ENCODE measurements at regions of chr4 and their contacts with region 1.

Region 1: DNA sequence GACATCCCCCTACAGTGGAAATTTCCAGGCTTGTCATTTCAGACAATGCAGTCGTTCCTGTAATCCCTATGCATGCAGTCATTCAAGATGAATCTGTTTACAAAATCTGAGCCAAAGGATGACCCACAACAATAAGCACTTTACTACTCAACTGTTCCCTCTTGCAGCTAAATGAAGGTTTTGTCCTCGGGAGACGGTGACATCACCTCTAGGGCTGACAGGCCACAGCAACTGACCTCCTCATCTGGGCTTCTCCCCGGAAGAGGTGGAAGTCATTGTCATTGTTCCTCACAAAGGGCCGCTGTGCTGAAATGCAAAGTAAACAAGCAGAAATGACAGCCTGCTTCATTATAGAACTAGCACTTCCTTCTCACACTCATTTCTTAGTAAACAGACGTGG is 29.2 kb downstream of the CLRN2 start:
- DNase-seq: no peak
- H3K4me3 ChIP-seq: no peak overlapping the region
- H3K4me3 Mint-ChIP-seq: no peak overlapping the region
- H3K27ac ChIP-seq: no peak overlapping the region
- H3K27ac Mint-ChIP-seq: no peak overlapping the region
- H3K4me1 ChIP-seq: no peaks in the 10 kb centered on the region
- H3K4me1 Mint-ChIP-seq: peaks cover 0 to 5% (median 1%) of the 10 kb centered on the region in 4 donors
- H3K27me3 ChIP-seq: no peaks in the 10 kb centered on the region
- H3K27me3 Mint-ChIP-seq: peaks cover 3 to 12% of the 10 kb centered on the region in 2 donors

Region 2: GRCh38 chr4:17045866-17046265 is 498.3 kb before region 1 on chr4:
- CTCF ChIA-PET with region 1: no interaction called
- POLR2A ChIA-PET with region 1: no interaction called
- intact Hi-C with region 1: no loop called
- DNase-seq: no peak
- H3K4me3 ChIP-seq: no peak overlapping the region
- H3K4me3 Mint-ChIP-seq: no peak overlapping the region
- H3K27ac ChIP-seq: no peak overlapping the region
- H3K27ac Mint-ChIP-seq: no peak overlapping the region
- H3K4me1 ChIP-seq: no peaks in the 10 kb centered on the region
- H3K4me1 Mint-ChIP-seq: no peaks in the 10 kb centered on the region
- H3K27me3 ChIP-seq: no peaks in the 10 kb centered on the region
- H3K27me3 Mint-ChIP-seq: peaks cover 0 to 2% of the 10 kb centered on the region in 2 donors

Region 3: GRCh38 chr4:17567271-17567670 is 23.1 kb after region 1 on chr4:
- CTCF ChIA-PET with region 1: interaction called, 18 read pairs
- POLR2A ChIA-PET with region 1: no interaction called
- intact Hi-C with region 1: no loop called
- DNase-seq: no peak
- H3K4me3 ChIP-seq: no peak overlapping the region
- H3K4me3 Mint-ChIP-seq: no peak overlapping the region
- H3K27ac ChIP-seq: no peak overlapping the region
- H3K27ac Mint-ChIP-seq: no peak overlapping the region
- H3K4me1 ChIP-seq: no peaks in the 10 kb centered on the region
- H3K4me1 Mint-ChIP-seq: no peaks in the 10 kb centered on the region
- H3K27me3 ChIP-seq: no peaks in the 10 kb centered on the region
- H3K27me3 Mint-ChIP-seq: peaks cover 1 to 2% of the 10 kb centered on the region in 2 donors

Region 4: GRCh38 chr4:17614416-17615299 is 70.5 kb after region 1 on chr4 and contains the start of gene MED28:
- CTCF ChIA-PET with region 1: interaction called, 15 read pairs
- POLR2A ChIA-PET with region 1: no interaction called
- intact Hi-C with region 1: no loop called
- DNase-seq: peak; percentile 92 to 96 (median 94)
- H3K4me3 ChIP-seq: peak within 1 kb of the TSS; percentile 82 to 100
- H3K4me3 Mint-ChIP-seq: peak within 1 kb of the TSS; percentile 95 to 100 (median 99)
- H3K27ac ChIP-seq: peak within 1 kb of the TSS; percentile 95
- H3K27ac Mint-ChIP-seq: peak within 1 kb of the TSS; percentile 95 to 100 (median 96)
- H3K4me1 ChIP-seq: peaks cover 45% of the 10 kb centered on the region
- H3K4me1 Mint-ChIP-seq: peaks cover 25 to 61% (median 44%) of the 10 kb centered on the region in 4 donors
- H3K27me3 ChIP-seq: no peaks in the 10 kb centered on the region
- H3K27me3 Mint-ChIP-seq: no peaks in the 10 kb centered on the region
- total RNA-seq, gene MED28: 85.4 to 87.0 TPM

Region 5: DNA sequence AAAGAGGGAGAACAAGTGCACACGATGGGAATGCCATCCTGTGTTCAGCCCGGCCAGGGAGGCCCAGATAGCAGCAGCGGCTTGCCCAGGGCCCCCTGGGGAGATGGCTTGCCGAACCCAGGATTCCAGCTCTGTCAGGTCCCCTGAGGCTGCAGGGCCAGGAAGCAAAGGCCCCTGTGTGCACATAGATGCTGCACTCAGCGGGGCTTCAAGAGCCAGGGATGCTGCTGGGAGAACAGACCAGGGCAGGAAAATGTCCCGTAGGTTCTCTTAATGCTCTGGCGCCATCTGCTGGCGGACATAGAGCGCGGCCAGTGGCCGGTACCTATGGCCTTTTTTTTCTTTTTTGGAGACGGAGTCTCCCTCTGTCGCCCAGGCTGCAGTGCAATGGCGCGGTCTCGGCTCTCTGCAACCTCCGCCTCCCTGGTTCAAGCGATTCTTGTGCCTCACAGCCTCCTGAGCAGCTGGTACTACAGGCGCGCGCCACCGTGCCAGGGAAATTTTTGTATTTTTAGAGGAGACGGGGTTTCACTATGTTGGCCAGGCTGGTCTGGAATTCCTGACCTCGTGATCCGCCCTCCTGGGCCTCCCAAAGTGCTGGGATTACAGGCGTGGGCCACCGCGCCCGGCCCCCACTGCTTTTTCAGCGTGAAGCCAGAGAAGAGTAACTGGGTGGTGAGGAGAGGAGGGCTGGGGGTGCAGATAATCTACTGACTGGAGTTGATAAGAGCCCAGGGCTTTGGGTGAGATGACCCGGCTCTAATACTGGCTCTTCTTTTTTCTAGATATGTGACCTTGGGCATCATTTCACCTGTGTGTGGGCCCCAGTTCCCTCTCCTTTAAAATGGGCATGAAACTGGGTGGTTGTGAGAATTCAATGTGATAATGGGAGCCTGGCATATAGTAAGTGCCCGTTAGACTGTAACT is 92.8 kb after region 1 on chr4:
- CTCF ChIA-PET with region 1: interaction called, 148 read pairs
- POLR2A ChIA-PET with region 1: interaction called, 3 read pairs
- intact Hi-C with region 1: loop called (anchors 1 kb)
- DNase-seq: peak; percentile 49 to 64 (median 59)
- H3K4me3 ChIP-seq: no peak overlapping the region
- H3K4me3 Mint-ChIP-seq: no peak overlapping the region
- H3K27ac ChIP-seq: no peak overlapping the region
- H3K27ac Mint-ChIP-seq: peak overlapping the region in 4 of 7 donors; percentile 7 to 56 (median 34)
- H3K4me1 ChIP-seq: no peaks in the 10 kb centered on the region
- H3K4me1 Mint-ChIP-seq: peaks cover 0 to 5% (median under 1%) of the 10 kb centered on the region in 4 donors
- H3K27me3 ChIP-seq: no peaks in the 10 kb centered on the region
- H3K27me3 Mint-ChIP-seq: no peaks in the 10 kb centered on the region

Region 6: GRCh38 chr4:17642404-17642783 is 98.2 kb after region 1 on chr4:
- CTCF ChIA-PET with region 1: interaction called, 148 read pairs
- POLR2A ChIA-PET with region 1: no interaction called
- intact Hi-C with region 1: no loop called
- DNase-seq: no peak
- H3K4me3 ChIP-seq: no peak overlapping the region
- H3K4me3 Mint-ChIP-seq: no peak overlapping the region
- H3K27ac ChIP-seq: no peak overlapping the region
- H3K27ac Mint-ChIP-seq: no peak overlapping the region
- H3K4me1 ChIP-seq: no peaks in the 10 kb centered on the region
- H3K4me1 Mint-ChIP-seq: peaks cover 0 to 3% (median 0%) of the 10 kb centered on the region in 4 donors
- H3K27me3 ChIP-seq: no peaks in the 10 kb centered on the region
- H3K27me3 Mint-ChIP-seq: peaks cover 0 to 1% of the 10 kb centered on the region in 2 donors

Region 7: DNA sequence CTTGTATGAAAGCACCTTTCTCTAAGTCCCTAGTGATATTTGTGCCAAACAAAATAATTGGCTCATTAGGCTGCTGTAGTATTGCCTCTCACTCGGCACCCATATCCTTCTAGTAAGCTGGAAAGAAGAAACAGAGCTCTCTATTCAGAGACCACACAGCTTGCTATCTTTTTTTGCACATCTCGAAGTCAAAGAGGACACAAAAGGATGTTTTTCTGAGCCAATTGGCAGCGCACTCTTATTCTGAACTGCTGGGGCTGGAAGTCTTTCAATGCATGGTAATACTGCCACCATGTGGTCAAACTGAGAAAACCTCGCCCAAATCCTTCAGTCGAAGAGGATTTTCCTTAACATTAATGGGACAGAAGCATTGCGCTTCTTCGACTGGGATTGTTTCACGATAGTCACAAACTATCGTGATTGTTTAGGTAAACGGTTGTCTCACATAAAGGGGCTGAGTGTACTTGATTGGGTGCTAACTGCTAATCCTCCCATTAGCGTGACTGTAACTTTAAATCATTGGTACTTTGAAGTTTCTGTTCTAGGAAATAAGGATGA is 1049.3 kb after region 1 on chr4:
- CTCF ChIA-PET with region 1: interaction called, 53 read pairs
- POLR2A ChIA-PET with region 1: no interaction called
- intact Hi-C with region 1: no loop called
- DNase-seq: peak; percentile 49 to 60 (median 57)
- H3K4me3 ChIP-seq: no peak overlapping the region
- H3K4me3 Mint-ChIP-seq: no peak overlapping the region
- H3K27ac ChIP-seq: no peak overlapping the region
- H3K27ac Mint-ChIP-seq: no peak overlapping the region
- H3K4me1 ChIP-seq: peaks cover 7% of the 10 kb centered on the region
- H3K4me1 Mint-ChIP-seq: peaks cover 5 to 6% (median 6%) of the 10 kb centered on the region in 4 donors
- H3K27me3 ChIP-seq: no peaks in the 10 kb centered on the region
- H3K27me3 Mint-ChIP-seq: peaks cover 7 to 22% of the 10 kb centered on the region in 2 donors